MCF 10A (cell line): ENCODE measurements at regions of chr2 and their contacts with region 1.

Region 1: DNA sequence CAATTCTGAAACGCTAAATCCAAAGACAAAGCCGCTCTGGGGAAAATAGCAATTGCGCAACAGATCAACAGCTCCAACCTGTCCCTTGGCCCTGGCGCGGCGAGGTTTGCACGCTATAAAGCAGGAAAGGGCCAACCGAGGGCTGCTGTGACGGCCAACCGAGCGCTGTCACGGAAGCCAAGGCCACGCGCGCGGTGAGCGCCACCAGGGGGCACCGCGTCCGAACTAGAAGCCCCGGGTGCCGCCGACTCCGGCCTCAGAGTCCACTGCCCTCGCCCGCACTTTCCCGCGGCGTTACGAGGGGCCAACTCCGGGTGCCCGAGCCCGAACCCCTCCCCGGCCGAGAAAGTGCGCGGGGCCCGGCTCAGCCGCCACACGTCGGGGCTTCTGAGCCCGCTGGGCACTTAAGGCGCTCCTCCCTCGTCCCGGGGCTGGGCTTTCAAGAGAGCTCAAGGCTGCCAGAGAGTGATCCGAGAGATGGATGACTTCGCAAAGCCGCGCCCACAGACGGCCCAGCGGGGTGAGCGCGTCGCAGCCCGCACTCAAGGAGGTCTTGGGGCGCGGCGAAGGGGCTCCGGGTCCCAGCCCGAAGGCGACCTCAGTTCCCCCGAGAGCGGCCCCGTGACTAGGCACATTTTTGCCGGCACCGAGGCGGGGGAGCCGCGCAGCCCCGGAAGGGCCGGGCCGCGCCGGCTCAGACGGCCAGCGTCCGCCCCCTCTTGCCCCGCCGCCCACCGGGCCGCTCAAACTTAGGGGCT is 897 bp downstream of the NFE2L2 start:
- DNase-seq: peak; percentile 99
- H3K4me3 Mint-ChIP-seq: peak overlapping the region; percentile 89
- H3K27ac Mint-ChIP-seq: peak overlapping the region; percentile 90
- H3K4me1 Mint-ChIP-seq: peaks cover 28% of the 10 kb centered on the region
- H3K27me3 Mint-ChIP-seq: no peaks in the 10 kb centered on the region
- CTCF ChIP-seq: peak; percentile 84

Region 2: GRCh38 chr2:177212106-177212890 is 51.3 kb before region 1 on chr2 and contains the start of gene HNRNPA3:
- CTCF ChIA-PET with region 1: interaction called, 9 read pairs
- POLR2A ChIA-PET with region 1: interaction called, 70 read pairs
- intact Hi-C with region 1: loop called (anchors 1 kb)
- DNase-seq: peak; percentile 98
- H3K4me3 Mint-ChIP-seq: peak within 1 kb of the TSS; percentile 91
- H3K27ac Mint-ChIP-seq: peak within 1 kb of the TSS; percentile 100
- H3K4me1 Mint-ChIP-seq: peaks cover 13% of the 10 kb centered on the region
- H3K27me3 Mint-ChIP-seq: no peaks in the 10 kb centered on the region
- CTCF ChIP-seq: no peak
- total RNA-seq, gene HNRNPA3: 142 and 179 TPM in 2 replicates

Region 3: DNA sequence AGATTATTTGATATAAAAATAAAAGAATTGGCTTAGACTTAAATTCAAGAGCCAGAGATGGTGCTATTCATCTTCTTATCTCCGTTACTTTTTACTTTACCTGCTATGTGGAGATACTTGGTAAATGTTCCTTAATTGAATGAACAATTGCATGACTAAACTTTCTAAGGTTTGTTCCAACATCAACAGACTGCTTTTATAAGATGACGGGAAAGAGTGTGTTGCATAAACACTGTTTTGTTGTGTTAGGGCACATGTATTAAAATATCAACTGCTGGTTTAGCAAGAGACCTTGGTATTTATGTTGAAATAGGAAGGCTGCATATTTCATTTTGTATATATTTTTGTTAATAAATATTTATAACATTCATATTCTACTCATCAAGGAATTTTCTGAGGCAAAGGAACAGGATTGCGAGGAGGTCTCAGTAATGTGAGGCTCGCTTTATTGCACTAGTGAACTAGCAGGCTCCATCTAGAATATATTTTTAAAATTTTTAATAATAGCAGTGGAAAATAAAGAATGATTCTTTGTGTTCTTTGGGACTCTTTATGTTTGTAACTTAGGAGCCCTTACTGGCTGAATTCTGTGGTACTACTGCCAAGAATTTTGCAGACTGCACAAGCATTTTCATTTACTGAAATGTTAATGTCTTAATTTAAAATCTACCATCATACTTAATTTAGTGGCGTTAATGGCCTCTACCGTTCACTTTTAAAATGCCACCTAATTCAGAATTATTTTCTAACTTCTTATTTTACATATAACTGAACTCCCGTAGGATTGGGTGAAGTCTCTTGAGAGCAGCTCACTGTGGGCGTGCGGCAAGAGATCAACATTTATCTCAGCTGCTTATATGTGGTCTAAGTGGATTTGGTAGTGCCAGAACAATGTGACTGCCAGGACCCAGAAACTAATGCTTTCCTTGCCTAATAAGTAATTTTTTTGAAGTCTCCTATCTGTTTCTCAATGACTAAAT is 11.7 kb after region 1 on chr2:
- CTCF ChIA-PET with region 1: interaction called, 24 read pairs
- POLR2A ChIA-PET with region 1: interaction called, 192 read pairs
- intact Hi-C with region 1: loop called (anchors 1 kb)
- DNase-seq: peak; percentile 93
- H3K4me3 Mint-ChIP-seq: peak overlapping the region; percentile 62
- H3K27ac Mint-ChIP-seq: peak overlapping the region; percentile 91
- H3K4me1 Mint-ChIP-seq: peaks cover 20% of the 10 kb centered on the region
- H3K27me3 Mint-ChIP-seq: no peaks in the 10 kb centered on the region
- CTCF ChIP-seq: no peak

Region 4: GRCh38 chr2:177296040-177296439 is 32.4 kb after region 1 on chr2:
- CTCF ChIA-PET with region 1: interaction called, 36 read pairs
- POLR2A ChIA-PET with region 1: interaction called, 77 read pairs
- intact Hi-C with region 1: loop called (anchors 1 kb)
- DNase-seq: peak; percentile 42
- H3K4me3 Mint-ChIP-seq: no peak overlapping the region
- H3K27ac Mint-ChIP-seq: no peak overlapping the region
- H3K4me1 Mint-ChIP-seq: no peaks in the 10 kb centered on the region
- H3K27me3 Mint-ChIP-seq: no peaks in the 10 kb centered on the region
- CTCF ChIP-seq: peak; percentile 32

Region 5: GRCh38 chr2:177325270-177325929 is 61.8 kb after region 1 on chr2:
- CTCF ChIA-PET with region 1: interaction called, 26 read pairs
- POLR2A ChIA-PET with region 1: interaction called, 47 read pairs
- intact Hi-C with region 1: no loop called
- DNase-seq: no peak
- H3K4me3 Mint-ChIP-seq: no peak overlapping the region
- H3K27ac Mint-ChIP-seq: no peak overlapping the region
- H3K4me1 Mint-ChIP-seq: no peaks in the 10 kb centered on the region
- H3K27me3 Mint-ChIP-seq: no peaks in the 10 kb centered on the region
- CTCF ChIP-seq: no peak

Region 6: GRCh38 chr2:177419274-177419673 is 155.6 kb after region 1 on chr2:
- CTCF ChIA-PET with region 1: interaction called, 10 read pairs
- POLR2A ChIA-PET with region 1: interaction called, 64 read pairs
- intact Hi-C with region 1: loop called (anchors 2 kb)
- DNase-seq: peak; percentile 77
- H3K4me3 Mint-ChIP-seq: peak overlapping the region; percentile 44
- H3K27ac Mint-ChIP-seq: peak overlapping the region; percentile 49
- H3K4me1 Mint-ChIP-seq: peaks cover 7% of the 10 kb centered on the region
- H3K27me3 Mint-ChIP-seq: no peaks in the 10 kb centered on the region
- CTCF ChIP-seq: no peak

Region 7: GRCh38 chr2:177506998-177507397 is 243.4 kb after region 1 on chr2:
- CTCF ChIA-PET with region 1: no interaction called
- POLR2A ChIA-PET with region 1: no interaction called
- intact Hi-C with region 1: no loop called
- DNase-seq: no peak
- H3K4me3 Mint-ChIP-seq: no peak overlapping the region
- H3K27ac Mint-ChIP-seq: peak overlapping the region; percentile 13
- H3K4me1 Mint-ChIP-seq: no peaks in the 10 kb centered on the region
- H3K27me3 Mint-ChIP-seq: no peaks in the 10 kb centered on the region
- CTCF ChIP-seq: no peak